ENCODE measurements at regions of chr13 and their contacts with region 1.

Region 1: GRCh38 chr13:98706446-98707110 is 45.9 kb downstream of the SLC15A1 start:
- DNase-seq: no peak
- ATAC-seq: no peak
- H3K4me3 ChIP-seq: no peak overlapping the region
- H3K27ac ChIP-seq: no peak overlapping the region
- H3K4me1 ChIP-seq: no peaks in the 10 kb centered on the region
- H3K27me3 ChIP-seq: no peaks in the 10 kb centered on the region
- CTCF ChIP-seq: no peak

Region 2: DNA sequence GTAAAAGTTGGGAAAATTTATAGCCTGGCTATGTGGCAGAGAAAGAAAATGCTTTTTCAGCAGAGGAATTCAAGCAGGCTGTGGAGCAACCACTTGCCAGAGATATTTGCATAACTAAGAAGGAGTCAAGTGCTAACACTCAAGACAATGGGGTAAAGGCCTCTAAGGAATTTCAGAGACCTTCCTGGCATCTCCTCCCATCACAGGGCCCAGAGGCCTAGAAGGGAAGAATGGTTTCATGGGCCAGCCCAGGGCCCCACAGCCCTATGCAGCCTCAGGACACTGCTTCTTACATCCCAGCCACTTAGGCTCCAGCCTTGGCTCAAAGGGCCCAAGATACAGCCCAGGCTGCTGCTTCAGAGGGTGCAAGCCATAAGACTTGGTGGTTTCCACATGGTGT is 31.6 kb after region 1 on chr13:
- CTCF ChIA-PET with region 1: no interaction called
- POLR2A ChIA-PET with region 1: interaction called, 17 read pairs
- in situ Hi-C with region 1: no loop called
- intact Hi-C with region 1: no loop called
- DNase-seq: no peak
- ATAC-seq: no peak
- H3K4me3 ChIP-seq: no peak overlapping the region
- H3K27ac ChIP-seq: no peak overlapping the region
- H3K4me1 ChIP-seq: no peaks in the 10 kb centered on the region
- H3K27me3 ChIP-seq: no peaks in the 10 kb centered on the region
- CTCF ChIP-seq: no peak